Caco-2 (cell line): ENCODE measurements at regions of chr2 and their contacts with region 1.

Region 1: DNA sequence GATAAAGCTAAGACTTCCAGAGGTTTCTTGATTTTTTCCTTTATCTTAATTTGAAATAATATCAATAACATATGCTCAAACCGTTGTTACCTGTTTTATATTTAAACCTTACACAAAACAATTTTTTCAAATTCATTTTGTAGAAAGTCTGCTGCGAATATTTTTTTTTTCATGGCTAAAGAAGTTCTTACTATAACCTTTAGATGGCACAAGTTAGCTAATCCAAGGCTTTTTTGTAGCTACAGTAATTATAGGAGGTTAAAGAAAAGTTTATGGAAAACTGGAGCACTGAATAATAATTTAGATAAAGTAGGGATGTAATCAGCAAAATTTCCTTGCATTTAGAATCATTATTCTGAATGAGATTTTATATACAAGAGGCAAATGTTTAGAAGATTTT is 78.0 kb upstream of the PNPT1 start:
- DNase-seq: peak in 1 of 2 experiments; percentile 14
- H3K4me3 ChIP-seq: no peak overlapping the region
- H3K4me3 Mint-ChIP-seq: no peak overlapping the region
- H3K27ac Mint-ChIP-seq: peak overlapping the region; percentile 18
- H3K4me1 ChIP-seq: peaks cover 7% of the 10 kb centered on the region
- H3K4me1 Mint-ChIP-seq: peaks cover 13% of the 10 kb centered on the region
- H3K27me3 ChIP-seq: no peaks in the 10 kb centered on the region
- H3K27me3 Mint-ChIP-seq: no peaks in the 10 kb centered on the region
- CTCF ChIP-seq: peak; percentile 64

Region 2: GRCh38 chr2:55718165-55719008 is 53.2 kb before region 1 on chr2:
- CTCF ChIA-PET with region 1: interaction called, 7 read pairs
- POLR2A ChIA-PET with region 1: no interaction called
- intact Hi-C with region 1: loop called (anchors 1 kb)
- DNase-seq: peak; percentile 65 to 81
- H3K4me3 ChIP-seq: no peak overlapping the region
- H3K4me3 Mint-ChIP-seq: no peak overlapping the region
- H3K27ac Mint-ChIP-seq: no peak overlapping the region
- H3K4me1 ChIP-seq: peaks cover 39% of the 10 kb centered on the region
- H3K4me1 Mint-ChIP-seq: peaks cover 31% of the 10 kb centered on the region
- H3K27me3 ChIP-seq: no peaks in the 10 kb centered on the region
- H3K27me3 Mint-ChIP-seq: no peaks in the 10 kb centered on the region
- CTCF ChIP-seq: peak; percentile 79 to 90

Region 3: GRCh38 chr2:55796121-55796520 is 24.5 kb after region 1 on chr2:
- CTCF ChIA-PET with region 1: no interaction called
- POLR2A ChIA-PET with region 1: no interaction called
- intact Hi-C with region 1: no loop called
- DNase-seq: no peak
- H3K4me3 ChIP-seq: no peak overlapping the region
- H3K4me3 Mint-ChIP-seq: no peak overlapping the region
- H3K27ac Mint-ChIP-seq: no peak overlapping the region
- H3K4me1 ChIP-seq: no peaks in the 10 kb centered on the region
- H3K4me1 Mint-ChIP-seq: no peaks in the 10 kb centered on the region
- H3K27me3 ChIP-seq: no peaks in the 10 kb centered on the region
- H3K27me3 Mint-ChIP-seq: no peaks in the 10 kb centered on the region
- CTCF ChIP-seq: no peak

Region 4: DNA sequence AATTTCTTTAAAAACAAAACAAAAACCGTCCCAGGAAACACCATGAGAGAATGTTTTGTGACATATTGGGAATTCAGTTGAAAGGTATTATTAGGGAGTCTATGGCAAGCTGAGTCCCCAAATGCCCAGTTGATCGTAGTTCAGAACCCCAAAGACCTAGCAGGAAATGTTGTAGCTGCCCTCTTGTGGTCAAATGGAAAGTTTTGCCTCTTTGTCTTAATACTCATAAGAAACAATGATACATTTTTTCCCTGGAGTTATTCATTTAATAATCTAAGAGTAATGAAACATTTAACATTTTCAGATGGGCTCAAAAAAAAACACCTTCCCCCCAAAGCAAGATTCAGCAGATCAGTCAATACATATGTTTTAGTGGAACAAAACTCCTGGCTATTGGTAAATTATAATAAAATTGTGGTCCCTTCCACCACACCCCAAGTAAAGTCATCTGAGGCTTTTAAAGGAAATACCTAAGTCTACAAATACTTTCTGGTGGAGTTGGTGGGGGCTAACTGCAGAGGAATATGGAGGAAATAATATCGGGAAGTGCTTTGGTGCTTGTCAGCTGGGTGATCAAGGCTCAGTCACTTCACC is 189.8 kb after region 1 on chr2:
- CTCF ChIA-PET with region 1: interaction called, 57 read pairs
- POLR2A ChIA-PET with region 1: no interaction called
- intact Hi-C with region 1: loop called (anchors 1 kb)
- DNase-seq: peak in 1 of 2 experiments; percentile 42
- H3K4me3 ChIP-seq: no peak overlapping the region
- H3K4me3 Mint-ChIP-seq: no peak overlapping the region
- H3K27ac Mint-ChIP-seq: peak overlapping the region; percentile 31
- H3K4me1 ChIP-seq: peaks cover 14% of the 10 kb centered on the region
- H3K4me1 Mint-ChIP-seq: peaks cover 21% of the 10 kb centered on the region
- H3K27me3 ChIP-seq: no peaks in the 10 kb centered on the region
- H3K27me3 Mint-ChIP-seq: no peaks in the 10 kb centered on the region
- CTCF ChIP-seq: peak; percentile 66 to 83

Region 5: GRCh38 chr2:55992465-55992864 is 220.9 kb after region 1 on chr2:
- CTCF ChIA-PET with region 1: no interaction called
- POLR2A ChIA-PET with region 1: no interaction called
- intact Hi-C with region 1: no loop called
- DNase-seq: no peak
- H3K4me3 ChIP-seq: no peak overlapping the region
- H3K4me3 Mint-ChIP-seq: no peak overlapping the region
- H3K27ac Mint-ChIP-seq: no peak overlapping the region
- H3K4me1 ChIP-seq: no peaks in the 10 kb centered on the region
- H3K4me1 Mint-ChIP-seq: no peaks in the 10 kb centered on the region
- H3K27me3 ChIP-seq: no peaks in the 10 kb centered on the region; the same call in 1 of the 2 replicates
- H3K27me3 Mint-ChIP-seq: peaks cover 8% of the 10 kb centered on the region
- CTCF ChIP-seq: no peak

Region 6: GRCh38 chr2:56009758-56010458 is 238.3 kb after region 1 on chr2:
- CTCF ChIA-PET with region 1: interaction called, 4 read pairs
- POLR2A ChIA-PET with region 1: no interaction called
- intact Hi-C with region 1: loop called (anchors 1 kb)
- DNase-seq: peak in 1 of 2 experiments; percentile 15
- H3K4me3 ChIP-seq: no peak overlapping the region
- H3K4me3 Mint-ChIP-seq: no peak overlapping the region
- H3K27ac Mint-ChIP-seq: no peak overlapping the region
- H3K4me1 ChIP-seq: no peaks in the 10 kb centered on the region
- H3K4me1 Mint-ChIP-seq: peaks cover 6% of the 10 kb centered on the region
- H3K27me3 ChIP-seq: no peaks in the 10 kb centered on the region
- H3K27me3 Mint-ChIP-seq: no peaks in the 10 kb centered on the region
- CTCF ChIP-seq: peak; percentile 52 to 59